Activated CD8-positive, alpha-beta T cell treated with anti-CD3 and anti-CD28 coated beads for 36 hours (primary cell): ENCODE measurements at regions of chr14 and their contacts with region 1.

Region 1: GRCh38 chr14:102316743-102317563 is 2.6 kb upstream of the ZNF839 start:
- DNase-seq: peak; percentile 94
- ATAC-seq: peak; percentile 62
- H3K4me3 Mint-ChIP-seq: peak overlapping the region; percentile 96
- H3K27ac Mint-ChIP-seq: peak overlapping the region; percentile 84
- H3K4me1 Mint-ChIP-seq: peaks cover 47% of the 10 kb centered on the region
- H3K27me3 Mint-ChIP-seq: no peaks in the 10 kb centered on the region
- CTCF ChIP-seq: peak; percentile 65

Region 2: GRCh38 chr14:101964297-101965144 is 352.4 kb before region 1 on chr14 and contains the start of gene DYNC1H1:
- CTCF ChIA-PET with region 1: interaction called, 8 read pairs
- POLR2A ChIA-PET with region 1: interaction called, 3 read pairs
- intact Hi-C with region 1: loop called (anchors 2 kb)
- DNase-seq: peak; percentile 89
- ATAC-seq: peak; percentile 81
- H3K4me3 Mint-ChIP-seq: peak within 1 kb of the TSS; percentile 89
- H3K27ac Mint-ChIP-seq: peak within 1 kb of the TSS; percentile 93
- H3K4me1 Mint-ChIP-seq: peaks cover 32% of the 10 kb centered on the region
- H3K27me3 Mint-ChIP-seq: no peaks in the 10 kb centered on the region
- CTCF ChIP-seq: no peak
- total RNA-seq, gene DYNC1H1: 291 to 301 TPM

Region 3: DNA sequence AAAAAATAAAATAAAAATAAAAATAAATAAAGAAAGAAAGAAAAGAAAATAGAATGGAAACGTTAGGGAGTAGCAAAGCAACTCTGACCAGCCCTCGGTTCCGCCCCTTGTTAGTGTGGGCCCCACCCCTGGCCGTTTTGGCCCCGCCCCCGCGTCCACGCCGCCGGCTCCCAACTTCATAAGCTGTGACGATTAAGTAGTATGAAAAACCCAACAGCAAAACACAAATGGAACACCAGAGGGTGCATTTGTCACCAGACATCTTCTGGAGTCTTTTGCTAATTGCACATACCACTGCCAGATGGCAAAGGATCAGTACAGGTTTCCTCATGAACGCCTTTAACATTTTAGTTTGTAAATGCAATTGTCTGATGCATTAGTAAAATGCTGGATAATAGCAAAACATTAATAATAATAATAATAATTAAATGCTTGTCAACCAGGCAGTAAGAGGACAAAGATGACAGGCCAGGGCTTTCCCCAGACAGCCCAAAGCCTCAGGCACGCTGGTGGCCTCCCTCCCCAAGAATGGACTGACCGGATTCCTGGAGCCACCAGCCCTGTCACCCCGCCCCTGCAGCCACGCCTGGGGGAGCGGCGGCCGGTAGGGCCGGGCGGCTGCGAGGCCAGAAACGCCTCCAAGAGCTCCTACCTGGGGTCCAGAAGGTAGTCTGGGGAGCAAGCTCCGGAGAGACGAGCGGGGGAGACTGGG is 253.7 kb before region 1 on chr14:
- CTCF ChIA-PET with region 1: interaction called, 12 read pairs
- POLR2A ChIA-PET with region 1: no interaction called
- intact Hi-C with region 1: no loop called
- DNase-seq: peak; percentile 81
- ATAC-seq: peak; percentile 90
- H3K4me3 Mint-ChIP-seq: no peak overlapping the region
- H3K27ac Mint-ChIP-seq: no peak overlapping the region
- H3K4me1 Mint-ChIP-seq: peaks cover 7% of the 10 kb centered on the region
- H3K27me3 Mint-ChIP-seq: no peaks in the 10 kb centered on the region
- CTCF ChIP-seq: peak; percentile 24

Region 4: GRCh38 chr14:102235275-102235897 is 81.6 kb before region 1 on chr14:
- CTCF ChIA-PET with region 1: interaction called, 18 read pairs
- POLR2A ChIA-PET with region 1: no interaction called
- intact Hi-C with region 1: loop called (anchors 2 kb)
- DNase-seq: peak; percentile 92
- ATAC-seq: peak; percentile 100
- H3K4me3 Mint-ChIP-seq: no peak overlapping the region
- H3K27ac Mint-ChIP-seq: no peak overlapping the region
- H3K4me1 Mint-ChIP-seq: no peaks in the 10 kb centered on the region
- H3K27me3 Mint-ChIP-seq: no peaks in the 10 kb centered on the region
- CTCF ChIP-seq: peak; percentile 74

Region 5: DNA sequence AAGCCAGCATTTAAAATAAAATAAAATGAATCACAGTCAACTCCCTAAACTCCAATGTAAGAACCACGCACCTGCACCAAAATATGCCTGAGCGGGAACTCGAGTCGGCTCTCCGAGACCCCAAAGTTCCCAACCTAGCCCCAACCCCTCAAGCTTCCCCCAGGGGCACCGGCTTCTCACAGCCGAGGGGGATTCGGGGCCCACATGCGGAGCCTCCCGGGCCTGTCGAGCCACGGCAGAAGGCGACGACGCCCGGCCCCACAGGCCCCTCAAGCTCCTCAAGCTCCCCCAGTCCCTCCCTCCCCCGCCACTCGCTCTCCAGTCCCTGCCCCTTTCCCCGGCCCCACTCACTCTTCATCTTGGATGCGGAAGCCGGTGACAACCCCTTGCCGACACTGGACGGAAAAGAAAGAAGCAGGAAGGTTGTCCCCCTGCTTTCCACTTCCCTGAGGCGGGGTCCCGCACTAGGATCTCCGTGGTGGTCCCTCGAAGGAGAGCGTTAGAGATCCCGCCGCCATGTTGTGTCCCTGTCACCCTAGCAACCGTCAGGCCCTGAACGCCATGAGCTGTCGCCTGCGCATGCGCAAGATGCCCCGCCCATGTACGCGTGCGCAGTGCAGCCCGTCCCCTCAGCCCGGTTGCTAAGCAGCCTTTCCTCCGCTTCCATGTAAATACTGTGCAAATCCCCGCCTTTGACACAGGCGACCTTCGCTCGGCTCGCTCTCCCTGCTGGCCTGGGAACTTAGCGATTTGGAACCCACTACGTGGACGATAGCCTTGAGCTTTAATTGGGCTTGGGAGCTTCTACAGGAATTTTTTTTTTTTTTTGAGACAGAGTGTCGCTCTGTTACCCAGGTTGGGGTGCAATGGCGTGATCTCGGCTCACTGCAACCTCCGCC is 12.1 kb before region 1 on chr14 and contains the start of gene MOK:
- CTCF ChIA-PET with region 1: interaction called, 39 read pairs
- POLR2A ChIA-PET with region 1: interaction called, 10 read pairs
- intact Hi-C with region 1: no loop called
- DNase-seq: peak; percentile 96
- ATAC-seq: peak; percentile 99
- H3K4me3 Mint-ChIP-seq: peak within 1 kb of the TSS; percentile 90
- H3K27ac Mint-ChIP-seq: peak within 1 kb of the TSS; percentile 83
- H3K4me1 Mint-ChIP-seq: peaks cover 4% of the 10 kb centered on the region
- H3K27me3 Mint-ChIP-seq: no peaks in the 10 kb centered on the region
- CTCF ChIP-seq: no peak
- total RNA-seq, gene MOK: 6.2 to 6.6 TPM

Region 6: DNA sequence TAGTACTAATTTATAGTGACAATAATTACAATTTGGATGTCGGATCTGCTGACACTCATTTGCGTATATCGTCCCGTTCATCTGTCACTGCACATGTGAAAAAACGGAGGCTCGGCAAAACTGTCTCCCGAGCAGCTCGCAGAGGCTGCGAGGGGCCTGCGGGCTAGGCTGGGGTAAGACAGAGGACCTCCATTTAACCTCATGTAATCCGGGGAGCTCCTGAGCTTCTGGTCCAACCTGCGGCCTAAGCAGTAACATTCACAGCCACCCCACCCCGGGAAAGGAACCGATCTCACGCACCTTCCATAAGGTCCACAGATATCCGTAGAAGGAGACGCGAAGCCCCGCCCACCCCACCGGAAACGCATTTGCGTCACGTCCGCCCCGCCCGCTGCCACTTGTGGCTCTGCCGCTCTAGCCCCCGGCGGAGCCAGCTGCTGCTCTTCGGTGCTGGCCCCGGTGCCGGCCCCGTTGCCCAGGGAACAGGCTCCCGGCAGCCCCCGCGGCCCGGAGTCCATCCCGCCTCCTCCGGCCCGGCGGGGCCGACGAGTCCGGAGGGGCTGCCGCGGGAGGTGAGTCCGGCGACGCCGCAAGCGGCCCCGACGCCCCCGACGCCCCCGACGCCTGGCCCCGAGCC is 45.7 kb after region 1 on chr14 and contains the starts of genes CINP and TECPR2:
- CTCF ChIA-PET with region 1: interaction called, 3 read pairs
- POLR2A ChIA-PET with region 1: interaction called, 10 read pairs
- intact Hi-C with region 1: no loop called
- DNase-seq: peak; percentile 99
- ATAC-seq: peak; percentile 81
- H3K4me3 Mint-ChIP-seq: no peak within 1 kb of the TSS
- H3K27ac Mint-ChIP-seq: peak within 1 kb of the TSS; percentile 95
- H3K4me1 Mint-ChIP-seq: peaks cover 35% of the 10 kb centered on the region
- H3K27me3 Mint-ChIP-seq: no peaks in the 10 kb centered on the region
- CTCF ChIP-seq: no peak
- total RNA-seq, gene CINP: 47.8 to 52.2 TPM
- total RNA-seq, gene TECPR2: 4.7 to 5.0 TPM